ENCODE measurements at regions of chr18 and their contacts with region 1.

Region 1: DNA sequence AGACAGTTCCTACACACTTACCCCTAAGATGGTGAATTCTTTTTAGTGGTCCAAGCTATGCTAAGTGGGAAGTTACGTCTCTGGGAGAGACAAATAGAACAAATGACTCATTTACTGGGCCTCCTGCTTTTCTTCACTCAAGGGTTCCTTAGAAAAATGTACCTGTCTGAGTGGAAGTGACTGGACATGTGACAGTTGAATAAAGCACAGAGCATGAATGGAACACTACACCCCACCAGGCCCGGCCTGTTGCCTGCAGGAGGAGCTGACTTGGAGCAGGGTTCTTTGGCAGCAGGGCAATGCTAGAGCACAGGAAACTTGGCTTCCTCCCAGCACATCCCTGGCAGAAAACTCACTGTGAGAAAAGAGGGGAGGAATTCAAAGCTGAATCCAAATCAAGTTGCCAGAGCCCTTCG is 451.0 kb upstream of the SETBP1 start:
- DNase-seq: peak; percentile 44
- H3K4me3 ChIP-seq: no peak overlapping the region
- H3K27ac ChIP-seq: peak overlapping the region in 2 of 4 donors; percentile 23 to 28
- H3K4me1 ChIP-seq: peaks cover 0 to 26% (median 8%) of the 10 kb centered on the region in 4 donors
- H3K27me3 ChIP-seq: no peaks in the 10 kb centered on the region
- CTCF ChIP-seq: no peak
- EP300 ChIP-seq: peak; percentile 74
- POLR2A ChIP-seq: no peak

Region 2: DNA sequence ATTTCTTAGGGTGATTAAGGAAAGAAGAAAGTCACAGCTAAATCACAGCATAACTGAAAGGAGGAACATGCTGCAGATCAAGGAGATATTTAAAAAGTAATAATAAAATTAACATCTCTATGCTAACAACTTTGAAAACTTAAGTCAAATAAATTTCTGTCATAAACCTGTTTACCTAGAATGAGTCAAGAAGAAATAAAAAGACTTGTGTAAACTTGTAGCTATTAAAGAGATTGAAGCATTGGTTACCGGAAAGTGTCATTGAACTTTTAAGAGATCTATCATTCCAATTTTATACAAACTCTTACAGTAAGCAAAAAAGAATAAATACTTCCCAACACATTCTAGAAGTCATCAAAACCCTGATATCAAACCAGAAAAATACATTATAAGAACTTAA is 432.4 kb before region 1 on chr18:
- in situ Hi-C with region 1: no loop called
- intact Hi-C with region 1: loop called (anchors 5 kb)
- DNase-seq: no peak
- H3K4me3 ChIP-seq: no peak overlapping the region
- H3K27ac ChIP-seq: no peak overlapping the region
- H3K4me1 ChIP-seq: no peaks in the 10 kb centered on the region
- H3K27me3 ChIP-seq: no peaks in the 10 kb centered on the region
- CTCF ChIP-seq: no peak
- EP300 ChIP-seq: no peak
- POLR2A ChIP-seq: no peak

Region 3: DNA sequence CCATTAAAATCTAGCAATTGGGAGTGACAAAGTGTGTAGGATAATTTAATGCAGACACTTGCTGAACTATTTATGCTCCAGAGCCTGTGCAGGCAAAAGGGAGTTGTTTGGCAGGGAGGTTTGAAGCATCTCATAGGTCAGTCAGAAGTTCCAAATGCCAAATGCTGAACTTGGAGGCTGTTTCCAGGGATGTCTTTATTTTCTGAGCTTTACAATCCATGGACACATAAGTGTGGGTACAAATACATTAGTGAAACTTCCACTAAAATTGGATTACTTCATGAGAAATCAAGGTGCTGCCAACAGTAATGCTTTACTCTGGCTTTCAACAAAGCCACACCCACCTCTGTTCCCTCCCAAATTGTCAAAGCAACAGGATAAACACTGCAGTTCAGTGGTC is 28.9 kb after region 1 on chr18:
- in situ Hi-C with region 1: no loop called
- intact Hi-C with region 1: no loop called
- DNase-seq: no peak
- H3K4me3 ChIP-seq: no peak overlapping the region
- H3K27ac ChIP-seq: no peak overlapping the region
- H3K4me1 ChIP-seq: no peaks in the 10 kb centered on the region
- H3K27me3 ChIP-seq: no peaks in the 10 kb centered on the region
- CTCF ChIP-seq: no peak
- EP300 ChIP-seq: no peak
- POLR2A ChIP-seq: no peak

Measured in transverse colon (tissue), 4 donors.